CD4-positive, alpha-beta T cell (primary cell): ENCODE measurements at regions of chr22 and their contacts with region 1.

Region 1: GRCh38 chr22:39532215-39533071 is at the start of gene RPS19BP1:
- DNase-seq: peak; percentile 98 to 100 (median 99)
- ATAC-seq: peak; percentile 85
- H3K4me3 ChIP-seq: peak within 1 kb of the TSS; percentile 73
- H3K4me3 Mint-ChIP-seq: peak within 1 kb of the TSS; percentile 98
- H3K27ac ChIP-seq: peak within 1 kb of the TSS; percentile 74 to 91
- H3K27ac Mint-ChIP-seq: peak within 1 kb of the TSS; percentile 90
- H3K4me1 ChIP-seq: peaks cover 67% of the 10 kb centered on the region
- H3K4me1 Mint-ChIP-seq: peaks cover 64% of the 10 kb centered on the region
- H3K27me3 ChIP-seq: no peaks in the 10 kb centered on the region
- H3K27me3 Mint-ChIP-seq: no peaks in the 10 kb centered on the region
- CTCF ChIP-seq: no peak
- total RNA-seq, gene RPS19BP1: 65.8 to 69.7 TPM

Region 2: DNA sequence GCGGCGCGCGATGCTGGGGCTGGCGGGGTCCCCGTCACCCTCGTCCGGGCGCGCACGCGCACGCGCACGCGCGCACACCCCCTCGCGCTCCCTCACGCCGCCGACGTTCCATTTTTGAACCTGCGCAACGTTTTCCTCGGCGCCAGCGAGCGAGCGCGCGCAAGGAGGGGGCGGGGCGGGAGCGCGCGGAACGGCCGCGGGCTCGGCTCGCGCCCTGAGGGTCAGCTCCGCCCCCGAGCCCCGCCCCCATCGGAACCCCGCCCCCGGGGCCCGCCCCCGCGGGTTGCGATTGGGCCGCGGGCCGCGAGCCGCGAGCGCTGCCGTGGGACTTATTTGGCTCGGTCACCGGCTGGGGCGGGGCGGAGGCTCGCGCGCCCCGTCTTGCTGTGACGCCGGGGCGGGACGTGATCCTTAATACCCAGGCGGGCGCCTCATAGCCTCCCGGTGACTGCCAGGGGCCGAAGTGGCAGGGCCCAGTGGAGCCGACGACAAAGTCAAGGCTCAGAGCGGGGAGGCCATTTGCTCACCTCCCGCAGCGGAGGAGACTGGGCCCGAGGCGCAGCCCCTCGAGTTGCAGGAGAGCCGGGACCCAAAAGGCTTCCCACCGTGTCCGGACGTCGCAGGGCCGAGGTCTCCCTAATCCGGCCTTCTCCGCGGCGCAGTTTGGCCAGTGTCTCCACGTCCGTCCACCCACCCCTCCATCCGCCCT is 379.8 kb before region 1 on chr22 and contains the start of gene CBX7:
- CTCF ChIA-PET with region 1: no interaction called
- POLR2A ChIA-PET with region 1: no interaction called
- intact Hi-C with region 1: loop called in 1 of 2 experiments (anchors 5 kb)
- DNase-seq: peak; percentile 84 to 98 (median 94)
- ATAC-seq: peak; percentile 83
- H3K4me3 ChIP-seq: peak within 1 kb of the TSS; percentile 94
- H3K4me3 Mint-ChIP-seq: peak within 1 kb of the TSS; percentile 94
- H3K27ac ChIP-seq: peak within 1 kb of the TSS; percentile 83 to 86
- H3K27ac Mint-ChIP-seq: peak within 1 kb of the TSS; percentile 100
- H3K4me1 ChIP-seq: peaks cover 54% of the 10 kb centered on the region
- H3K4me1 Mint-ChIP-seq: peaks cover 39% of the 10 kb centered on the region
- H3K27me3 ChIP-seq: no peaks in the 10 kb centered on the region
- H3K27me3 Mint-ChIP-seq: no peaks in the 10 kb centered on the region
- CTCF ChIP-seq: no peak
- total RNA-seq, gene CBX7: 48.6 to 49.1 TPM

Region 3: DNA sequence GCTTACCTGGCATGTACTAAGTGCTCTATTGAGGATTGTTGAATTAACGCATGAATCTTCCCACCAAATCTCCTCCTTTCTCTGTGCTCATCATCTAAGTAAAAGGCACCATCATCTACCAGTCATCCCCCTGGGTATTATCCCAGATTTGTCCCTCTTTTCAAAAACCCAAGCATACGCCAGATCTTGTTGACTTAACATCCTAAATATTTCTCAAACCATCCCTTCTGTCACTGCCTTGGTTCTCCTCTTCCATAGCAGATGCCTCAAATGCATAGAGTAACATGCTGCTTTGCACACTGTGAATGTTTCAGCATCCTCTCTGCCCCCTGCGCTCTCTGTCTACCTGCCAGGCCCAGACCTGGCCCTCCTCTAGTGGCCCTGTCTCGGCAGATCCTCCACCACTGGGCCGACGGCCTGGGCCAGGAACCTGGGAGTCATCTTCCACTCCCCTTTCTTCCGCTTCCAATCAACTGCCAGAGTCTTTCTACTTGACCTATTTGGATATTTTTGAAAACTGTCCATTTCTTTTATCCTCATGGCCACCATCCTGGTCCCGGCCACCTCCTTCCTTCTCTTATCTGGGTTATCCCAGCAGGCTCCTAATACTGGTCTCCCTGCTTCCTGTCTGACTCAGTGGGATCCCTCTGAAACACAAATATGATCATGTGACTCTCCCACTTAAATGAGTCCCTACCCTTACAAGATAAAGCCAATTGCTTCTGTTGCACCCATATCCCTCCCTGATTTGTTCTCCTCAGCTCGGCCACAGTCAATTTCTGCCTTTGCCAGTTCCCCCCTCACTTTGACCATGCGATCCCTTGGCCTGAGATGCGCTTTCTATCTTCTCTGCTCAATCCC is 136.3 kb before region 1 on chr22:
- CTCF ChIA-PET with region 1: interaction called, 11 read pairs
- POLR2A ChIA-PET with region 1: interaction called, 16 read pairs
- intact Hi-C with region 1: loop called in 1 of 2 experiments (anchors 5 kb)
- DNase-seq: no peak
- ATAC-seq: no peak
- H3K4me3 ChIP-seq: no peak overlapping the region
- H3K4me3 Mint-ChIP-seq: peak overlapping the region; percentile 17
- H3K27ac ChIP-seq: no peak overlapping the region
- H3K27ac Mint-ChIP-seq: no peak overlapping the region
- H3K4me1 ChIP-seq: peaks cover 19% of the 10 kb centered on the region
- H3K4me1 Mint-ChIP-seq: peaks cover 18% of the 10 kb centered on the region
- H3K27me3 ChIP-seq: no peaks in the 10 kb centered on the region
- H3K27me3 Mint-ChIP-seq: no peaks in the 10 kb centered on the region
- CTCF ChIP-seq: no peak

Region 4: GRCh38 chr22:39502109-39502788 is 30.2 kb before region 1 on chr22 and contains the start of gene MIEF1:
- CTCF ChIA-PET with region 1: interaction called, 44 read pairs
- POLR2A ChIA-PET with region 1: interaction called, 9 read pairs
- intact Hi-C with region 1: no loop called
- DNase-seq: peak; percentile 70 to 96 (median 86)
- ATAC-seq: peak; percentile 94
- H3K4me3 ChIP-seq: peak within 1 kb of the TSS; percentile 67
- H3K4me3 Mint-ChIP-seq: peak within 1 kb of the TSS; percentile 99
- H3K27ac ChIP-seq: peak within 1 kb of the TSS; percentile 61 to 71
- H3K27ac Mint-ChIP-seq: peak within 1 kb of the TSS; percentile 92
- H3K4me1 ChIP-seq: peaks cover 39% of the 10 kb centered on the region
- H3K4me1 Mint-ChIP-seq: peaks cover 47% of the 10 kb centered on the region
- H3K27me3 ChIP-seq: no peaks in the 10 kb centered on the region
- H3K27me3 Mint-ChIP-seq: no peaks in the 10 kb centered on the region
- CTCF ChIP-seq: no peak
- total RNA-seq, gene MIEF1: 19.8 to 20.4 TPM

Region 5: GRCh38 chr22:39900306-39901227 is 368.1 kb after region 1 on chr22 and contains the start of gene GRAP2:
- CTCF ChIA-PET with region 1: interaction called, 3 read pairs
- POLR2A ChIA-PET with region 1: no interaction called
- intact Hi-C with region 1: loop called in 1 of 2 experiments (anchors 5 kb)
- DNase-seq: peak; percentile 54 to 94 (median 66)
- ATAC-seq: peak; percentile 96
- H3K4me3 ChIP-seq: peak within 1 kb of the TSS; percentile 70
- H3K4me3 Mint-ChIP-seq: peak within 1 kb of the TSS; percentile 89
- H3K27ac ChIP-seq: peak within 1 kb of the TSS; percentile 53 to 66
- H3K27ac Mint-ChIP-seq: no peak within 1 kb of the TSS
- H3K4me1 ChIP-seq: peaks cover 28% of the 10 kb centered on the region
- H3K4me1 Mint-ChIP-seq: peaks cover 23% of the 10 kb centered on the region
- H3K27me3 ChIP-seq: no peaks in the 10 kb centered on the region
- H3K27me3 Mint-ChIP-seq: no peaks in the 10 kb centered on the region
- CTCF ChIP-seq: no peak
- total RNA-seq, gene GRAP2: 65.3 to 75.6 TPM

Region 6: DNA sequence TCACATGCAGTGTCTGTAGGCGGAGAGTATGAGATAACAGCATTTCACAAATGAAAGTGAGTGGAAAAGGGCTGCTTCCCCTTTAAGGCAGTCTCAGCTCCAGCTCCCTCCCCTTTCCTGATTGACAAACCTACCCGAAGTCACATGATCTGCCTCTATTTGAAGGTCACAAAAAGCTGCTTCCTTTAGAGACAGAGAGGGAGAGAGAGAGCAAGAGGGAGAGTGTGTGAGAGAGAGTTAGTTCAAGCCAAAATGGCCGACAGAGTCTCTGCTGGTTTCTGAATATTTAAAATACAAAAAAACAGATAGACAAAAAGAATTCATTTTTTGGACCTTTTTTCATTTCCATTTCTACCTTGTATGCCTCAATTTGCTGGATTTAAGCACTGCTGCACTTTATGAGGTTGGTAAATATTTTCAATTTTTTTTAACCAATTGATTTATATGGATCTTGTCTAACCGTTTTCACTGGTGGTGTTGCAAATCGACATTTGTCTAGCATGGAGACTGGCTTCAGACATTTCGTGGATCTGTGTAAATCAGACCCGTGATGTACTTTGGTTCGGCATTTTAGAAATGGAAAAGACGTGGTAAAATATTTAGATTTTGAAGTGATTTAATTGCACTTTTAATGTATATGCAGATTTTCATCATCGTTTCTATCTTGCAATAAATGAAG is 645.4 kb after region 1 on chr22 and contains the start of gene TNRC6B:
- CTCF ChIA-PET with region 1: interaction called, 8 read pairs
- POLR2A ChIA-PET with region 1: interaction called, 3 read pairs
- intact Hi-C with region 1: loop called (anchors 10 kb)
- DNase-seq: peak; percentile 36 to 97 (median 58)
- ATAC-seq: peak; percentile 80
- H3K4me3 ChIP-seq: peak within 1 kb of the TSS; percentile 74
- H3K4me3 Mint-ChIP-seq: peak within 1 kb of the TSS; percentile 90
- H3K27ac ChIP-seq: peak within 1 kb of the TSS; percentile 49 to 84
- H3K27ac Mint-ChIP-seq: peak within 1 kb of the TSS; percentile 90
- H3K4me1 ChIP-seq: peaks cover 47% of the 10 kb centered on the region
- H3K4me1 Mint-ChIP-seq: peaks cover 72% of the 10 kb centered on the region
- H3K27me3 ChIP-seq: no peaks in the 10 kb centered on the region
- H3K27me3 Mint-ChIP-seq: no peaks in the 10 kb centered on the region
- CTCF ChIP-seq: no peak
- total RNA-seq, gene TNRC6B: 110 to 111 TPM